ENCODE measurements at regions of chr6 and their contacts with region 1.

Region 1: DNA sequence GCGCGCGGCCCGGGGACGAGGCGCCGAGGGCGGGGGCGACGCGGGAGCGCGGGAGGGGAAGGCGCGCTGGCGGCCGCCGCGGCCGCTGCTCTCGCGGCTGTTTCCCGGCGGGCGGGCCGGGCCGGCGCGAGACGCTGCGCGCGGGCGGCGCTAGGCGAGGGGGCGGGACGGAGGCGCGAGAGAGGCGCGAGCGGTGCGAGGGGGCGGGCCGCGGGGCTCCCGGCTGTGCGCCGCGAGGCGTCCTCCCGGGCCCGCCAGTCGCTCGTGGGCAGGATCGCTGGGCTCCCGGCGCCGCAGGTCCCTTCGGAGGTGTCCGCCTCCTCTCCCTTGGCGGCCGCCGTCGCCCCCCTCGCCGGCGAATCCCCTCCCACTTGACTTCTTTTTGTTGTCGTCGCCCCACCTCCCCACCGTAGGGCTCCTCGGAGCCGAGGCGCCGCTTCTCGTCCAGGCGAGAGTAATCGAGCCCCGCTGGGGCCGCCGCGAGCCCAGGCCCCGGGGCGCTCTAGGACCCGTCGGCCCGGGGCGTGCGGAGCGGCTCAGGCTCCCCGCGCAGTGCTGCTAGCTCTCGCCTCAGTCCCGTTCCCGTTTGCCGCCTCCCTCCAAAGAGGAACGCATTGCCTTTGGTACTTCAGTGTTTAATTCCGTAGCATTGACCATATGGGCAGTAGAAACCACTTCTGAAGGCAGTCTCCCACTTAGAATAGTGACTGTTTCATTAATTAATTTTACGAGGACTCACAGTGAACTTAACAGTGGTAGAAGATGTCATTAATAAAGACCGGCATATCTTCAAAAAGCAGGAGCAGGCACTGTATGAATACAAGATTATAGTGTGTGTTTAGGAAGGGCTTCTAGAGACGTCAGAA is at the start of gene RANBP9:
- DNase-seq: peak; percentile 84
- H3K4me3 ChIP-seq: peak within 1 kb of the TSS; percentile 79 to 97 (median 88)
- H3K27ac ChIP-seq: peak within 1 kb of the TSS; percentile 87
- H3K4me1 ChIP-seq: peaks cover 14% of the 10 kb centered on the region
- H3K27me3 ChIP-seq: no peaks in the 10 kb centered on the region
- CTCF ChIP-seq: no peak
- total RNA-seq, gene RANBP9: 26.7 to 44.4 TPM

Region 2: DNA sequence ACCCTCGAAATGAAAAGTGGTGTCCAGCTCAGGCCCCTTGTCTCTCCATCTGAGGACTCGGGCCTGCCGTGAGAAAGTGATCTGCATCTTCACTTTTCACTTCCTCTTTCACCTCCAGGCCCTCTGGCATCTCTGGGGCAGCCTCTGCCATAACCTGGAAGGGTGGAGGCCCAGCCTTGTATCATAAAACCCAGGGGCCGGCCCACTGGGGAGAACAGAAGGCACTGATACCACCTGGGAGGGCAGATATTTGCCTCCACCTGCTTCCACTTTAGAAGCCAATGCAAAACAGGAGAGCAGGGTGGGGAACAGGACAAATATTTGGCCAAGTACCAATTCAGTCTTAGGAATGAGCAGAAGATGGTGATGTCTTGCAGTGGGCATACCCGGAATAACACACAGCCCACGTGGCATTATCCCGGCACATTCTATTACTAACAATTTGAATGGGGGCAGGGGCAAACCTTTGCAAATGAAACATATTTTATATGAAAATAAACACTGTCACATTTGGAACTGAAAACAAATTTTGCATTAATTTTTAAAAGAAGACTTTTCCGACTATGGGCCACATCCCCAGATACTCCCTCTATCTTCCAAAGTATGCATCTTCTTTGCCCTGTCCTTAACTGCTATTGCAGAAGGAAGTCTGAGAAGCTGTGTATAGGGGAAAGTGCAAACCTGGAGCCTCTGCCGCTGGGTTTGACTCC is 314.5 kb before region 1 on chr6:
- CTCF ChIA-PET with region 1: no interaction called
- dilution Hi-C with region 1: no loop called
- in situ Hi-C with region 1: no loop called
- intact Hi-C with region 1: no loop called
- DNase-seq: no peak
- H3K4me3 ChIP-seq: no peak overlapping the region
- H3K27ac ChIP-seq: no peak overlapping the region
- H3K4me1 ChIP-seq: peaks cover 22% of the 10 kb centered on the region
- H3K27me3 ChIP-seq: no peaks in the 10 kb centered on the region
- CTCF ChIP-seq: peak in 1 of 2 donors; percentile 6

Region 3: DNA sequence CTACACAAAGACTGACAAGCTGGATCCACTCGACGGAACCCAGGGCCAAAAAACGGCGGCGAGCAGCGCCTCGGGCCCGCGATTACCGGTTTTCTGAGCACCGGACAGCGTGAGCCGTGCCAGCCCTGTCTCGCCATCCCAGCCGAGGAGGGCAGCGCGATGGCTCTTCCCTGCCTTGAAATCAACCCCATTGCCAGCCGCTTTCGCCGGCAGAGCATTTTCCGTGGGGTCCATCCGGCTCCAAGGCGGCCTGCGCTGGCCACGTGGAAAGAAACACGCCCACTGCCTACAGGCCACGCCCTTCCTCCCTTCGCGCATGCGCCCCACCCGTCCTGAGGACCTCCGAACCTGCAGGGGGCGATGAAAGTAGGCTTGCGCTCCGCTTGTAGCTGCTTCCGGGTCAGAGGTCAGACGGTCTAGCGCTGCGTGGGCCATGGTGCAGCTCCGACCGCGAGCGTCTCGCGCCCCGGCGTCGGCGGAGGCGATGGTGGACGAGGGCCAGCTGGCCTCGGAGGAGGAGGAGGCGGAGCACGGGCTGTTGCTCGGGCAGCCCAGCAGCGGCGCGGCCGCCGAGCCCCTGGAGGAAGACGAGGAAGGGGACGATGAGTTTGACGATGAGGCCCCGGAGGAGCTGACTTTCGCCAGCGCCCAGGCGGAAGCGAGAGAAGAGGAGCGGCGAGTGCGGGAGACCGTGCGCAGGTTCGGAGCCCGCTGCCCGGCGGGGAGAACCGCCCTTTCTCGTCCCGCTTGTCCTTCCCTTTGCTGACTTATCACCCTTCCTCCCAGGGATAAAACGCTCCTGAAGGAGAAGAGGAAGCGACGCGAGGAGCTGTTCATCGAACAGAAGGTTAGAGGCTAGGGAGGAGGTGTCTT is 96.8 kb before region 1 on chr6 and contains the start of gene NOL7:
- CTCF ChIA-PET with region 1: no interaction called
- dilution Hi-C with region 1: no loop called
- in situ Hi-C with region 1: no loop called
- intact Hi-C with region 1: loop called (anchors 5 kb)
- DNase-seq: peak; percentile 95
- H3K4me3 ChIP-seq: peak within 1 kb of the TSS; percentile 66 to 85 (median 81)
- H3K27ac ChIP-seq: peak within 1 kb of the TSS; percentile 77
- H3K4me1 ChIP-seq: peaks cover 10% of the 10 kb centered on the region
- H3K27me3 ChIP-seq: no peaks in the 10 kb centered on the region
- CTCF ChIP-seq: peak; percentile 95
- total RNA-seq, gene NOL7: 20.3 to 70.0 TPM

Region 4: GRCh38 chr6:13696226-13696625 is 15.7 kb before region 1 on chr6:
- CTCF ChIA-PET with region 1: no interaction called
- dilution Hi-C with region 1: no loop called
- in situ Hi-C with region 1: no loop called
- intact Hi-C with region 1: no loop called
- DNase-seq: peak; percentile 2
- H3K4me3 ChIP-seq: no peak overlapping the region
- H3K27ac ChIP-seq: no peak overlapping the region
- H3K4me1 ChIP-seq: peaks cover 6% of the 10 kb centered on the region
- H3K27me3 ChIP-seq: no peaks in the 10 kb centered on the region
- CTCF ChIP-seq: no peak

Region 5: GRCh38 chr6:13725570-13725969 is 13.6 kb after region 1 on chr6:
- CTCF ChIA-PET with region 1: no interaction called
- dilution Hi-C with region 1: no loop called
- in situ Hi-C with region 1: no loop called
- intact Hi-C with region 1: loop called (anchors 1 kb)
- DNase-seq: peak; percentile 94
- H3K4me3 ChIP-seq: no peak overlapping the region
- H3K27ac ChIP-seq: peak overlapping the region; percentile 79
- H3K4me1 ChIP-seq: peaks cover 52% of the 10 kb centered on the region
- H3K27me3 ChIP-seq: no peaks in the 10 kb centered on the region
- CTCF ChIP-seq: no peak

Region 6: DNA sequence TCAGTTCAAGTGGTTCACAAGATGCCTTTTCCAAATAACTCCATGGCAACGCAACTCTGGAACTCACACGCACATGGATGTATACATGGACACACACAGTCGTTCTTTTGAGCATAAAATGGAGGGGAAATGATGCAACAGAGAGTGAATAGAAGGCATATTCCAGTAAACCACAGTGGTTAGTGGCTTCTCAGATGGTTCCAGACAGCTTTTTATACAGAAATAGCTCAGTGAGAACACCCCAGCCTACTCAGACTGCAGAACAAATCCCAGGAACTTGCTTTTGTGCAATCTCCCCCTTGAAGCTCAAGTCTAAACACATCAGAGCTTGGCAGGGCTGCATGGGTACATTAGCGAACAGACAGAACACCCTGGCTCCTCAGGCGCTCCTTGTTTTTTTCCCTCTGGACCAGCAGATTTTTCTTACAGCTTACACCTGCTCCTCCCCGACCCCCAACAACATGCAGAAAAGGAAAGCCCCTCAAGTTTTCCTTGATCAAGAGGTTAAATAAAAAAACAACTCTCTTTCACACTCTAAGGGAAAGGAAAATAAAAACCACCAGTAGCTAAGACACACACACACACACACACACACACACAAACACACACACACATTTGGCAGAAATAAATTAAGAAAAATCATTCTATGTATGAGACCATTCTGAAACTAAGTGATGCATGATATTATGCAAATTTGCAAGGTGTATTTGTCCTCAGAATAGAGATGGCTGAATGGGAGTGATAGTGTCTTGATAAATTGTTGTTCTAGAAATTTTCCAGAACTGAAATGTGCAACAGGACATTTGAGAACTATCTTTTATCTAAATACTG is 50.9 kb after region 1 on chr6:
- CTCF ChIA-PET with region 1: no interaction called
- dilution Hi-C with region 1: no loop called
- in situ Hi-C with region 1: no loop called
- intact Hi-C with region 1: loop called (anchors 1 kb)
- DNase-seq: peak; percentile 93
- H3K4me3 ChIP-seq: peak overlapping the region in 1 of 3 experiments; percentile 14
- H3K27ac ChIP-seq: peak overlapping the region; percentile 71
- H3K4me1 ChIP-seq: peaks cover 51% of the 10 kb centered on the region
- H3K27me3 ChIP-seq: no peaks in the 10 kb centered on the region
- CTCF ChIP-seq: no peak

Region 7: GRCh38 chr6:13814176-13814937 is 102.4 kb after region 1 on chr6 and contains the start of gene MCUR1:
- CTCF ChIA-PET with region 1: interaction called, 4 read pairs
- dilution Hi-C with region 1: no loop called
- in situ Hi-C with region 1: no loop called
- intact Hi-C with region 1: loop called (anchors 5 kb)
- DNase-seq: peak; percentile 86
- H3K4me3 ChIP-seq: peak within 1 kb of the TSS; percentile 71 to 88 (median 81)
- H3K27ac ChIP-seq: peak within 1 kb of the TSS; percentile 66
- H3K4me1 ChIP-seq: peaks cover 15% of the 10 kb centered on the region
- H3K27me3 ChIP-seq: no peaks in the 10 kb centered on the region
- CTCF ChIP-seq: peak in 1 of 2 donors; percentile 10
- total RNA-seq, gene MCUR1: 12.0 to 28.0 TPM

Region 8: GRCh38 chr6:13881621-13882225 is 169.8 kb after region 1 on chr6:
- CTCF ChIA-PET with region 1: no interaction called
- dilution Hi-C with region 1: no loop called
- in situ Hi-C with region 1: no loop called
- intact Hi-C with region 1: no loop called
- DNase-seq: no peak
- H3K4me3 ChIP-seq: no peak overlapping the region
- H3K27ac ChIP-seq: no peak overlapping the region
- H3K4me1 ChIP-seq: peaks cover 6% of the 10 kb centered on the region
- H3K27me3 ChIP-seq: no peaks in the 10 kb centered on the region
- CTCF ChIP-seq: no peak

Measured in mammary epithelial cell (primary cell).